Activated CD4-positive, alpha-beta T cell treated with anti-CD3 and anti-CD28 coated beads for 36 hours (primary cell): ENCODE measurements at regions of chr11 and their contacts with region 1.

Region 1: DNA sequence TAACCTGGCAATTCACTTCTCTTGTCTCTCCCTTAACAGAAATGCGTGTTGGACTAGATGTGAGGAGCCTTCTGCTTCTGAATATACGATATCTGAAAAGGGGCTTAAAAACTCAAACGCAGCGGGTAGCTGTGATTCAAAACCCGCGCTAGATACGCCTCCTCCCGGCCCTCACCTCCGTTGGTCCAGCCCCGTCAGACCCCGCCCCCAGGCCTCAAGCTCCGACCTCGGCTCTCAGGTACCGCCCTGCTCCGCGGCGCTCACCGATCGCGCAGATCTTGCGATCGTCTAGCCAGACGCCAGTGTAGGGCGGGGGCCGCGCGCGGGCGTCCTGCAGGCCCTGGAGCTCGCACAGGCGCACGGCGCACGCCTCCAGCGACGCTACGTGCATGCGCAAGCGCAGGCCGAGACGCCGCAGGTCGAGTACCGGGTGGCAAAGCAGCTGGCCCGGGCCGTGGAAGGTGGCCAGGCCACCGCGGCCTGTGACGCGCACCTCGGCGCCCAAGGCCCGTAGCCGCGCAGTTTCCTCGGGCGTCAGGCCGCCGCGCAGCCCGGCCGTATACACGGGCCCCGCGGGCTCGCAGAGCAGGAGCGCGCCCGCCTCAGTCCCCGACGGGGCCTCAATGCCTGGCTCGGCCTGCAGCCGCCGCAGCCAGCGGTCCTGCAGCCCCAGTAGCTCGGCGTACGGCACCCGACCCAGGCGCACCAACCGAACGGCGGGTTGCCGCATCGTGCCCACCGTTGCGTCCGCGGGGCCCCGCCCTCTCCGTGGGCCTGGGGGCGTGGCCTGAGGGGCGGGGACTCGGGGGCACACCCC is at the start of gene LIPT2:
- DNase-seq: peak; percentile 99
- ATAC-seq: peak; percentile 96
- H3K4me3 Mint-ChIP-seq: peak within 1 kb of the TSS; percentile 73
- H3K27ac Mint-ChIP-seq: peak within 1 kb of the TSS; percentile 86
- H3K4me1 Mint-ChIP-seq: peaks cover 22% of the 10 kb centered on the region
- H3K27me3 Mint-ChIP-seq: no peaks in the 10 kb centered on the region
- total RNA-seq, gene LIPT2: 4.2 to 5.0 TPM

Region 2: DNA sequence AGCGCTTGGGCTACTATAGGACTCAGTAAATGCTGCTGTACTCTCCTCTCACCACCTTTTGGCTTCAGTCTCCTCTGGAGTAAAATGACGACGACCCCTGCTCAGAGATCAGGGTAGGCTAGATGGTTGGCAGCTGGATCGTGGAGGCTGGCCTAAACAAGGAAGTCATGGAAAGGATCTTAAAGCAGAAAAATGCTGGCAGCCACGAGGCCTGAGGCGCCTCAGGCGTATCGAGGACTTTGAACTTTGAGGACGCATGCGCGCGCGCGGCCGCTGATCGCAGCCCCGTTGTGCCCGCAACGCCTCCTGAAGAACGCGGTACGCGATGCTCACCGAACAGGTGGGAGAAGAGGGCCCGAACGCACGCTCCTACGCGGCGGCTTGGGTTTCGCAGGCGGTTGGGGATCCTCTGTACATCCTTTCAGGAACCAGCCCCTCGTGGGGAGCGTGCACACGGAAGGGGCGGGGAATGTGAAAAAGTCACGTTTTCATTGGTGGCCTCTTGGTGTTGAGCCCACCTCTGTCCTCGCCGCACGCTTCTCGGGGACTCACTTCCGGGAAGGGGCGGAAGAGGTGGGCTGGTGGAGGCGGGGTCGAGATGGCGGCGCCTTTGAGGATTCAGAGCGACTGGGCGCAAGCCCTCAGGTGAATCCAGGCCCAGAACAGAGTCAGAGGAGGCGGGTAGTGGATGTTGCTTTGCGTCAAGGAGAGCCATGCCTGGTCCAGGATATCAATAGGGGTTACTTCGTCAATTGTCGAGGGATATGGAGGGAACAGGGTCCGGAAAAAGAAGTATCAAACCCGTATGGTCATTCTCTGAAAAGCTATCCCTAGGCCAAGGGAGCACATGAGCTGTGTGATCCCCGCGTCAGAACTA is 616.5 kb before region 1 on chr11 and contains the starts of genes COA4 and PAAF1:
- CTCF ChIA-PET with region 1: no interaction called
- POLR2A ChIA-PET with region 1: no interaction called
- intact Hi-C with region 1: loop called in 1 of 2 experiments (anchors 1 kb)
- DNase-seq: peak; percentile 97
- ATAC-seq: peak; percentile 95
- H3K4me3 Mint-ChIP-seq: peak within 1 kb of the TSS; percentile 93
- H3K27ac Mint-ChIP-seq: peak within 1 kb of the TSS; percentile 100
- H3K4me1 Mint-ChIP-seq: peaks cover 32% of the 10 kb centered on the region
- H3K27me3 Mint-ChIP-seq: no peaks in the 10 kb centered on the region
- total RNA-seq, gene COA4: 103 to 112 TPM
- total RNA-seq, gene PAAF1: 34.2 to 34.8 TPM

Region 3: DNA sequence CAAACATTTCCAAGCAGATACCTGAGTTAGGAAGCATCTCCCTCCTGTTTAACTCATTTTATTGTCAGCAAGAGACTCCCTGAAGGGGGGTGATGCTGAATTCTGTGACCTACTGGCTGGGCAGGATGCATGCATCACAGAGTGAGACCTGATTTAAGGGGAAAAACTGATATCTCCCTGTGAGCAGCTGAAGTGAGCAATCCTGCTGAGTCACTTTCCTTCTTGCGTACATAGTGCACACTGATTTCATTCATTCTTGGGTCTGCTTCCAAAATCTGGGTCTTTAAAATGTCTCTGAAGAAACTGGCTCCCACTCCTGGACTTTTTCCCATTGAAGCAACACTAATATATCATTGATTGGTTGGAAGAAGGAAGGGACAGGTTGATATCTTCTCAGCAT is 205.0 kb before region 1 on chr11:
- CTCF ChIA-PET with region 1: no interaction called
- POLR2A ChIA-PET with region 1: no interaction called
- intact Hi-C with region 1: no loop called
- DNase-seq: peak; percentile 28
- ATAC-seq: peak; percentile 85
- H3K4me3 Mint-ChIP-seq: no peak overlapping the region
- H3K27ac Mint-ChIP-seq: no peak overlapping the region
- H3K4me1 Mint-ChIP-seq: peaks cover 6% of the 10 kb centered on the region
- H3K27me3 Mint-ChIP-seq: peaks cover 3% of the 10 kb centered on the region

Region 4: DNA sequence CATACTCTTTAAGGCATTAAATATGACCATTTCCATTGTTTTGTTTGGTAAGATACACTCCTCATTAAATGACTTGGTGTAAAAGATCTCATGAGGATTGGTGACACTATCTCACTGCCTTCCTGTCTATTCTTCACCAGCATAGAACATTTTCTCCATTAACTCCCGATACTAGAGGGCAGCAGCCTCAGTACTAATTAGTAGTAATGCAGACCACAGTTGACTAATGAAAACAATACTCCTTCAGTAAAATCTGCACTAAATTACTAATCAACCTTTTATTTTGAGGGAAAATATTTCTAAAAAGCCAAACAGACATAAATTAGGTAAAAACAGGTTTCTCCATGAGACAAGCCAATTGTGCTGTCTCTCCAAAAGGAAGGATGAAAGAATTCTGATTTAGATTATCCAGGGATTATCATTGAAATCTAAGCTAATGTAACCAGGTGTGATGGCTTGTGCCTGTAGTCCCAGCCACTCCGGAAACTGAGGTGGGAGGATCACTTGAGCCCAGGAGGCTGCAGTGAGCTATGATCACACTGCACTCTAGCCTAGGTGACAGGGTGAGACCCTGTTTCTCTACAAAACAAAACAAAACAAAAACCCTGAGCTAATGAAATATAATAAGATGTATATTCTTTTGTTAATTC is 104.4 kb before region 1 on chr11:
- CTCF ChIA-PET with region 1: interaction called, 7 read pairs
- POLR2A ChIA-PET with region 1: no interaction called
- intact Hi-C with region 1: loop called (anchors 2 kb)
- DNase-seq: peak; percentile 81
- ATAC-seq: peak; percentile 81
- H3K4me3 Mint-ChIP-seq: no peak overlapping the region
- H3K27ac Mint-ChIP-seq: peak overlapping the region; percentile 75
- H3K4me1 Mint-ChIP-seq: peaks cover 41% of the 10 kb centered on the region
- H3K27me3 Mint-ChIP-seq: no peaks in the 10 kb centered on the region

Region 5: DNA sequence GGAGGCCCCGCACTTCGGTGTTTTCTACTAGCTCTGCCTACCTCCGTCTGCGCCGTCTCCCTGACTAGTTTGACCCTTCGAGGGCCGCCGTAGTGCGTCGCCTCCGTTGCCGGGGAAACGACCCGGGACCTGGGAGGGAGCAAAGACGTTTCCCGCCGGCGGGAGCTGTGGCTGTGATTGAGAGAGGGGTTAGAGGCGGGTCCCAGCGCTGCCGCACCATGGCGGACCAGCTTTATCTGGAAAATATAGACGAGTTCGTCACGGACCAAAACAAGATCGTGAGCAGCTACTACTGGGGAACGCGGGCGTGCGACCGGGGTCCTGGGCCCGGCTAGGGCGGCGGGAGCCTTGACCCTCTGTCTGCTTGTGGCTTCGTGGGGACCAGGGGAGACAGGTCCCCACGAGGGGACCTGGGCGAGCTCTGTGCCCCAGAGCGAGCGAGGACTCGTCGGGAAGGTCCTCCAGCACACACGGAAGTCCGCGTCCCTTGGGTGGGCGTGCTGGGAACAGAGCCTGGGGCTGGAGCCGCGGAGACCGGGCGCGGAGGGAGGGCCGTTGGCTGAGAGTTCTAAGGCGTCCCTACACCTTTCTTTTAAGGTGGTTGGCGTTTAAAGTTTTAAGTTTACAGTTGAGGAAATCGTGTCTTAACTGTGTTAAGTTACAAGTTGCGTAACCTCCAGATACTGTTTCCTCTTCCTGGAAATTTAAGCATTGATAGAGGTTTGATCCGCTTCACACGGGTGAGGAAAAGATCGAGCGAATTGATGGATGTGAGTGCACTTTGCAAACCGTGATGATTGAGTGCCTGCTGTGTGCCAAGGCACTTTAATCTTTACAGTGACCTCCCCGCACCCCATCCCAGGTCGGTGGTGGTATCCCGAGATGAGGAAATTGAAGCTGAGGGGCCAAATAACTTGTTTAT is 99.5 kb after region 1 on chr11 and contains the start of gene POLD3:
- CTCF ChIA-PET with region 1: interaction called, 3 read pairs
- POLR2A ChIA-PET with region 1: interaction called, 19 read pairs
- intact Hi-C with region 1: loop called (anchors 1 kb)
- DNase-seq: peak; percentile 98
- ATAC-seq: peak; percentile 96
- H3K4me3 Mint-ChIP-seq: peak within 1 kb of the TSS; percentile 93
- H3K27ac Mint-ChIP-seq: peak within 1 kb of the TSS; percentile 96
- H3K4me1 Mint-ChIP-seq: peaks cover 27% of the 10 kb centered on the region
- H3K27me3 Mint-ChIP-seq: no peaks in the 10 kb centered on the region
- total RNA-seq, gene POLD3: 70.0 to 79.8 TPM

Region 6: GRCh38 chr11:75525596-75526541 is 1032.7 kb after region 1 on chr11 and contains the start of gene GDPD5:
- CTCF ChIA-PET with region 1: no interaction called
- POLR2A ChIA-PET with region 1: no interaction called
- intact Hi-C with region 1: loop called in 1 of 2 experiments (anchors 5 kb)
- DNase-seq: peak; percentile 93
- ATAC-seq: peak; percentile 94
- H3K4me3 Mint-ChIP-seq: peak within 1 kb of the TSS; percentile 76
- H3K27ac Mint-ChIP-seq: peak within 1 kb of the TSS; percentile 29
- H3K4me1 Mint-ChIP-seq: peaks cover 18% of the 10 kb centered on the region
- H3K27me3 Mint-ChIP-seq: no peaks in the 10 kb centered on the region
- total RNA-seq, gene GDPD5: 16.8 to 22.0 TPM